HEK293T (cell line): ENCODE measurements at regions of chr19 and their contacts with region 1.

Region 1: GRCh38 chr19:58362272-58362994 is at the start of gene ZNF497:
- DNase-seq: peak; percentile 99

Region 2: DNA sequence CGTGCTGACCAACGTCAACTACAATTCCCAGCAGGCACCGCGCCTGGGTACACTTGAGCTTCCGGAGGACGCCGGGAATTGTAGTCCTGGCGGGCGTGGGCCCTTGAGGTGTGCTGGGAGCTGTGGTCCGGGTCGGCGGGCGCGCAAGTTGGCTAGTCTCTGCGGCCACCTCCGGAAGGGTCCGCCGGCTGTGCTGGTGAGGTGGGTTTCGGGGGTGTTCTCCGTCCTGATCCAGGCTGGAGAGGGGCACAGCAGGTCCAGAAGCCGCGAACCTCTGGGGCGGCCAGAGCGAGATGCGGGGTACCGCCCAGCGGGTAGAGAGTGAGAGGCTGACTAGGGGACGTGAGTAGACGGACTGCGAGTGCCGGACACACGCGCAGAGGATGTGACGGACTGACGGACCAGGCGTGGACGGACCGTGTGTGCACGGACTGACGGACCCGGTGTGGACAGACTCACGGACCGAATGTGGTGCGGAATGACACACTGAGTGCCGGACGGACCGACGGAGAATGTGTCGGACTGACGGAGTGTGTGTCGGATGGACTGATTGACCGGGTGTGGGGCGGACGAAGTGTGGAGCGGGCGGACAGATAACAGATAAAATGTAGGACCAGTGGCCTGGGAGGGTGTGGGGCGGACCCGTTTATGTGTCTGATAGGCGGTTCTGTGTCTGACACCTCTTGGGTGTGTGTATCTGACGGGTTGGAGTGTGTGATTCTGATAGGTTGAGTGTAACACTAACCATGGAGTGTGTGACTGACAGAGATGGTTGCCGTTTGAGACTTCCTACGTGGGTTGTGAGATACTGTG is 35.3 kb before region 1 on chr19 and contains the start of gene ZSCAN22:
- CTCF ChIA-PET with region 1: interaction called, 3 read pairs
- POLR2A ChIA-PET with region 1: interaction called, 18 read pairs
- DNase-seq: peak; percentile 95

Region 3: DNA sequence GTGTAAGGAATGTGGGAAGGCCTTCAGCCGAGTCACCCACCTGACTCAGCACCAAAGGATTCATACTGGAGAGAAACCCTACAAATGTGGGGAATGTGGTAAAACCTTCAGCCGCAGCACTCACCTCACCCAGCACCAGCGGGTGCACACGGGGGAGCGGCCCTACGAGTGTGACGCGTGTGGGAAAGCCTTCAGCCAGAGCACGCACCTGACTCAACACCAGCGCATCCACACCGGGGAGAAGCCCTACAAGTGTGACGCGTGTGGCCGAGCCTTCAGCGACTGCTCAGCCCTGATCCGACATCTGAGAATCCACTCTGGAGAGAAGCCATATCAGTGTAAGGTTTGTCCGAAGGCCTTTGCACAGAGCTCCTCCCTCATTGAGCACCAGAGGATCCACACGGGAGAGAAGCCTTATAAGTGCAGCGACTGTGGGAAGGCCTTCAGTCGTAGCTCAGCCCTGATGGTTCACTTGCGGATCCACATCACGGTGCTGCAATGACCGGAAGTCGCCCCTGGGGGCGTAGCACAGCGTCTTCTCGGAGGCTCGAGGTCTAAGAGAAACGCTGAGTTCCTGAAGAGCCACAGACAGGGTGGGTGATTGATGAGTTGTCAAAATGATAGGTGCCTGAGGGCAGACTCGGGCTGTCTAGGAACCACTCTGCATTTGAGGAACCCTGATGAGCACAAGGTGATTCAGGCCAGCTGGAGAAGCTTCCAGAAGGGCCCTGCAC is 23.4 kb before region 1 on chr19:
- CTCF ChIA-PET with region 1: no interaction called
- POLR2A ChIA-PET with region 1: no interaction called
- DNase-seq: peak; percentile 26

Region 4: DNA sequence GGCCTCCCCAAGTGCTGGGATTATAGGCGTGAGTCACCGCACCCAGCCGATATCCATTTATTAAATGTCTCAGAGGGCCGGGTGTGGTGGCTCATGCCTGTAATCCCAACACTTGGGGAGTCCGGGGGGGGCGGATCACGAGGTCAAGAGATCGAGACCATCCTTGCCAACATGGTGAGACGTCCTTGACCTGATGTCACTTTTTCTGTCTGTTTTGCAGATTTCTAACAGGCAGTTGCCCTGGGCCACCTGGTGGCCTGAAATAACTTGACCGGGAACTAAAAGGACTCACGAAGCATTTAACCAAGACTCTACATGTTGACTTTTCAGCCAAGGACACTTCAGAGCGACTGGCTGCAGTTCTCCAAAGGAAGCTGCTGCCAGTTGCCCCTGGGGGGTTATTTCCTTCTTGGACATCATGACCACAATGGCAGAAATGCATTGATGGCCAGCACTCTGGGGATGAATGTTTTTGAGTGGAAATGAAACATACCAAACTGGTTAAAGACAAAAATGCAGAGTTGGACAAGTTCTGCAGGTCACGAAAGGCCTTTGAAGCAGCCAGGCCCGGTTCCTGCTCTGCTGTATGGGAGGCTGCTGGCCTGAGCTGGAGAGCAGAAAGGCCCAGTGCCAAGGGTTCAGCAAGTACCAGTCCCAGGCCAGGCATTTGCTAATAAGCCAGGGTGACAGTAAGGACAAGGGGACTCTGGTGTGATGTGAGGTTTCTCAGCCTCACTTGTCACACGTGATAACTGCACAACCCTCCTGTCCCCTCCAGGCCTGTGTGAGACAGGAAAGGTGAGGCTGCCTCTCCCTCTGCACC is 10.1 kb after region 1 on chr19:
- CTCF ChIA-PET with region 1: no interaction called
- POLR2A ChIA-PET with region 1: interaction called, 14 read pairs
- DNase-seq: no peak

Region 5: GRCh38 chr19:58386576-58387337 is 24.3 kb after region 1 on chr19 and contains the start of gene RPS5:
- CTCF ChIA-PET with region 1: no interaction called
- POLR2A ChIA-PET with region 1: interaction called, 21 read pairs
- DNase-seq: peak; percentile 98